ENCODE measurements at regions of chr3 and their contacts with region 1.

Region 1: GRCh38 chr3:121269389-121269788 is 276.4 kb downstream of the POLQ start:
- DNase-seq: no peak
- CTCF ChIP-seq: no peak

Region 2: DNA sequence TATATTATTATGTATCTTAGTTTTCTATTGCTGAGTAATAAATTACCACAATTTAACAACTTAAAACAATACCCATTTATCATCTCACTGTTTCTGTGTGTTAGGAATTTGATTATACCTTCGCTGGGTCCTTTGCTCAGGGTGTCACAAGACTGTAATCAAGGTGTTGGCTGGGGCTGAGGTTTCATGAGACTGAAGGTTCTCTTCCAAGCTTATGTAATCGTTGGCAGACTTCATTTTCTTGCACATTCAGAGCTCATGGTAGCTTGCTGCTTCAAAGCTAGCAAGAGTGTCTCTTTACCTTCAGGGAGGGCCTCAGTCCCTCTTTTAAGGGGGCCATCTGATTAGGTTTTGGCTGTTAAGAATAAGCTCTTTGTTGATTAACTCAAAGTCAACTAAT is 16.7 kb before region 1 on chr3:
- CTCF ChIA-PET with region 1: interaction called, 10 read pairs
- POLR2A ChIA-PET with region 1: no interaction called
- DNase-seq: no peak
- CTCF ChIP-seq: no peak

Region 3: DNA sequence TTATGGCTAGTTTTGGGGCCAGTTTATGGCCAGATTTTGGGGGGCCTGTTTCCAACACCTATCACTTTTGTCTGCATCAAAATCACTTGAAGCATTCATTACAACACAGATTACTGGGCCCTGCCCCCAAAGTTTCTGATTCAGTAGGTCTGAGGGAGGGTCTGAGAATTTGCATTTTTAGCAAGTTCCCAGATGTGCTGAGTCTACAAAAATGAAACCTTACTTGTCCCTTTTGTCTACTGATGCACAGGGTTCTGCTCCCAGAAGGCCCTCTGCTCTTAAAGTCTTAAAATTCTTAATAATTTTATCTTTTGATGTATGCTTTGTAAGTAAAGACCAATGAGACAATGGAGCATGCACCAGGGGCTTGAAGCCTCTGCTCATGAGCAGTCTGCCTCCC is 130.4 kb after region 1 on chr3:
- CTCF ChIA-PET with region 1: no interaction called
- POLR2A ChIA-PET with region 1: no interaction called
- DNase-seq: no peak
- CTCF ChIP-seq: no peak

Region 4: GRCh38 chr3:121424549-121424948 is 155.2 kb after region 1 on chr3:
- CTCF ChIA-PET with region 1: no interaction called
- POLR2A ChIA-PET with region 1: no interaction called
- DNase-seq: no peak
- CTCF ChIP-seq: no peak

Region 5: GRCh38 chr3:121545574-121546455 is 276.4 kb after region 1 on chr3 and contains the start of gene POLQ:
- CTCF ChIA-PET with region 1: no interaction called
- POLR2A ChIA-PET with region 1: no interaction called
- DNase-seq: peak; percentile 91
- CTCF ChIP-seq: no peak